ENCODE measurements at regions of chr9 and their contacts with region 1.

Region 1: DNA sequence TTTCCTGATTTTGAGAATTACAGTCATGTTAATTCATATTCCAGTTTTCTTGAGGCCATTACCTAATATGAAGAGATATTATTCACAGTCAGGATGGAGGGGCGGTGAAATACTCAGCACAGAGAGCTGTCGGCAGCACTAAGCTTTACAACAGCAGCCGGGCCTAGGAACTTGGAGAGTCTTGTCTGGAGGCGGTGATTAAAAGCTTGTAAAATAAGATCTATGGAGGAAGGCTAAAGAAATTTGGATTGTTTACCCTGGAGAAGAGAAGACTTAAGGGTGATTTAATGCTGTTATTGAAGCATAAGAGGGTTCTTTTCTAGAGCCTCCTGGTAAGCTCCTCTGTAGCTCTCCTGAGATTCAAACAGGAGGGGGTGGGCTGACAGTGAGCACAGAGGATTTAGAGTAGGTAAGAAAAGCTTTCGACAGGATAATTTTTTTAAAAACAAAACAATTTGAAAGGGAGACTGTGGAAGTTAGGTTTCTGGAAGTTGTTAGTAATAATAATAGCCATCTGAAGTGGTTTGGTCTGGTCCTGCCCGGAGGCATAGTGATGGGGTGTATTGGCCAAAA is 406.3 kb upstream of the ADAMTSL1 start:
- DNase-seq: peak; percentile 76
- H3K4me3 ChIP-seq: no peak overlapping the region
- H3K27ac ChIP-seq: peak overlapping the region in 2 of 4 donors; percentile 50 to 51
- H3K4me1 ChIP-seq: peaks cover 0 to 15% (median 7%) of the 10 kb centered on the region in 4 donors
- H3K27me3 ChIP-seq: peaks cover 0 to 12% (median 2%) of the 10 kb centered on the region in 3 donors
- CTCF ChIP-seq: no peak
- EP300 ChIP-seq: peak in 1 of 4 donors; percentile 22
- POLR2A ChIP-seq: no peak

Region 2: DNA sequence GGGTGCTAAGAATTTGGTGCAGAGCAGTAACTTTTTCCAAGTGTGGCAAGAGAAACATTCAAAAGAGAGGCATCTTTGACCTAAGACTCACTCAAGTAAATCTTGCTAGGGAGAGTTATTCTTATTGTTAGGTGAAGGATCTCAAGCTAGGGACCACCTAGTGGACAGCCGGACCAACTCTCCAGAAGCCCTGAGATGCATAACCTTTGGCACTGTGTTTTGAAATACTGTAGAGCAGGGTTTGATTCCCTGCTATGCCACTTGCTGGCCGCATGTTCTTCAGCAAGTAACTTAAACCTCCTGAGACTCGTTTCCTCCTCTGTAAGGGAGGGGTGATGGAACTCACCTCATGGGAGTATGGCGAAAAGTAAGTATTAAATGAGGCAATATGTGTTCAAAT is 70.2 kb after region 1 on chr9:
- intact Hi-C with region 1: loop called (anchors 5 kb)
- DNase-seq: no peak
- H3K4me3 ChIP-seq: no peak overlapping the region
- H3K27ac ChIP-seq: no peak overlapping the region
- H3K4me1 ChIP-seq: peaks cover 0 to 32% (median 17%) of the 10 kb centered on the region in 4 donors
- H3K27me3 ChIP-seq: peaks cover 0 to 4% (median 0%) of the 10 kb centered on the region in 3 donors
- CTCF ChIP-seq: no peak
- EP300 ChIP-seq: no peak
- POLR2A ChIP-seq: no peak

Measured in sigmoid colon (tissue), 7 donors.